ENCODE measurements at regions of chr12 and their contacts with region 1.

Region 1: GRCh38 chr12:71157601-71158233 is at the start of gene TSPAN8:
- DNase-seq: peak; percentile 83
- ATAC-seq: peak; percentile 66
- H3K4me3 ChIP-seq: peak within 1 kb of the TSS; percentile 44
- H3K27ac ChIP-seq: peak within 1 kb of the TSS; percentile 70
- H3K4me1 ChIP-seq: peaks cover 66% of the 10 kb centered on the region
- H3K27me3 ChIP-seq: no peaks in the 10 kb centered on the region
- CTCF ChIP-seq: no peak
- total RNA-seq, gene TSPAN8: 1.3 TPM in 1 of 2 replicates, not detected in the other

Region 2: DNA sequence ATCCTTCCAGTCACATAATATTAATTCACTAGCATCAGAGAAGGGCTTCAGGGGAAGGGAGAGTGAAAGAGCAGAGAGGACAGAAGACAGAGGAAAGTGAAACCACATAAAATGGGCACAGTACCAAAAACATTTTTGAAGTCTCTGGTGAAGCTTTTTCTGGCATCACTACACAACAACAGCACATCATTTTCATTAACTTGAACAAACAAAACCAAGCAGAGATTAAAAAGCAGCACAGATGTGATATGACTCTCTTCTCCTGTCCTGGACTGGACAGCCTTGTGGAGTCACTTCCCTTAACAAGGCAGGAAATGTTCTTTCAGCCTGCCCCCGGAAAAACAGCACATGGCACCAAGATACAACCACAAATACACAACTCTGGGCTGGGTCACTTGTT is 111.9 kb before region 1 on chr12:
- CTCF ChIA-PET with region 1: no interaction called
- POLR2A ChIA-PET with region 1: no interaction called
- intact Hi-C with region 1: loop called (anchors 10 kb)
- DNase-seq: peak; percentile 78
- ATAC-seq: peak; percentile 83
- H3K4me3 ChIP-seq: peak overlapping the region; percentile 19; the same call in 1 of the 2 replicates
- H3K27ac ChIP-seq: peak overlapping the region; percentile 92
- H3K4me1 ChIP-seq: peaks cover 25% of the 10 kb centered on the region
- H3K27me3 ChIP-seq: no peaks in the 10 kb centered on the region
- CTCF ChIP-seq: no peak

Region 3: GRCh38 chr12:71183018-71183417 is 25.3 kb after region 1 on chr12:
- CTCF ChIA-PET with region 1: no interaction called
- POLR2A ChIA-PET with region 1: no interaction called
- intact Hi-C with region 1: loop called (anchors 2 kb)
- DNase-seq: peak; percentile 92
- ATAC-seq: peak; percentile 98
- H3K4me3 ChIP-seq: no peak overlapping the region
- H3K27ac ChIP-seq: peak overlapping the region; percentile 72
- H3K4me1 ChIP-seq: peaks cover 19% of the 10 kb centered on the region
- H3K27me3 ChIP-seq: no peaks in the 10 kb centered on the region
- CTCF ChIP-seq: no peak